AG04450 (cell line): ENCODE measurements at regions of chr4 and their contacts with region 1.

Region 1: GRCh38 chr4:108570993-108571569 is 49.3 kb upstream of the RPL34 start:
- DNase-seq: peak; percentile 3
- H3K4me3 ChIP-seq: no peak overlapping the region
- H3K27ac ChIP-seq: no peak overlapping the region
- H3K27me3 ChIP-seq: peaks cover 9% of the 10 kb centered on the region
- CTCF ChIP-seq: no peak

Region 2: GRCh38 chr4:108024085-108024877 is 546.8 kb before region 1 on chr4:
- CTCF ChIA-PET with region 1: interaction called, 163 read pairs
- POLR2A ChIA-PET with region 1: no interaction called
- DNase-seq: no peak
- H3K4me3 ChIP-seq: no peak overlapping the region
- H3K27ac ChIP-seq: no peak overlapping the region
- H3K27me3 ChIP-seq: no peaks in the 10 kb centered on the region
- CTCF ChIP-seq: no peak

Region 3: GRCh38 chr4:108030332-108030731 is 540.7 kb before region 1 on chr4:
- CTCF ChIA-PET with region 1: interaction called, 53 read pairs
- POLR2A ChIA-PET with region 1: no interaction called
- DNase-seq: peak; percentile 24
- H3K4me3 ChIP-seq: no peak overlapping the region
- H3K27ac ChIP-seq: no peak overlapping the region
- H3K27me3 ChIP-seq: no peaks in the 10 kb centered on the region
- CTCF ChIP-seq: peak; percentile 64

Region 4: GRCh38 chr4:108060164-108060563 is 510.9 kb before region 1 on chr4:
- CTCF ChIA-PET with region 1: interaction called, 50 read pairs
- POLR2A ChIA-PET with region 1: no interaction called
- DNase-seq: peak; percentile 4
- H3K4me3 ChIP-seq: no peak overlapping the region
- H3K27ac ChIP-seq: no peak overlapping the region
- H3K27me3 ChIP-seq: peaks cover 4% of the 10 kb centered on the region
- CTCF ChIP-seq: peak; percentile 29

Region 5: GRCh38 chr4:108581083-108581482 is 10.0 kb after region 1 on chr4:
- CTCF ChIA-PET with region 1: interaction called, 21 read pairs
- POLR2A ChIA-PET with region 1: no interaction called
- DNase-seq: no peak
- H3K4me3 ChIP-seq: no peak overlapping the region
- H3K27ac ChIP-seq: no peak overlapping the region
- H3K27me3 ChIP-seq: no peaks in the 10 kb centered on the region
- CTCF ChIP-seq: no peak

Region 6: GRCh38 chr4:108589961-108590360 is 18.9 kb after region 1 on chr4:
- CTCF ChIA-PET with region 1: interaction called, 12 read pairs
- POLR2A ChIA-PET with region 1: no interaction called
- DNase-seq: no peak
- H3K4me3 ChIP-seq: no peak overlapping the region
- H3K27ac ChIP-seq: no peak overlapping the region
- H3K27me3 ChIP-seq: no peaks in the 10 kb centered on the region
- CTCF ChIP-seq: no peak